GM12878 (cell line): ENCODE measurements at regions of chr7 and their contacts with region 1.

Region 1: DNA sequence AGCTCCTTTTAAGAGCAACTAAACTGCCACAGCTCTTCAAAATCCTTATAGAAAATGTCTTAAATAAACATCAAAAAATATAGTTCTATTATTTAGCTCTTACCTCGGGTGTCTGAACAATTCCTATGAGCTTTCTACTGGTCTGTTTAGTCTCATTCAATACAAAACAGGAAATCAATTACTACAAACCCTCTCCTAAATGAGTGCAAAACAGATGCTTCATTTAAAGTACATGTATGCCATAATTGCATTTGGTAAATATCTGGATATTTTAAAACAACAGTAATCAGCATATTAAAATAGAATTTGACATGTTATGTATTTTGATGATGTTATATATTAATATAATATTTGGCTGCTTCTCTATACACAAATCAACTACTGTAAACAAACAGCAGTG is 38.5 kb upstream of the MTPN start:
- DNase-seq: no peak
- ATAC-seq: no peak
- H3K4me3 ChIP-seq: no peak overlapping the region
- H3K27ac ChIP-seq: no peak overlapping the region
- H3K4me1 ChIP-seq: no peaks in the 10 kb centered on the region
- H3K27me3 ChIP-seq: no peaks in the 10 kb centered on the region
- CTCF ChIP-seq: no peak
- EP300 ChIP-seq: no peak
- POLR2A ChIP-seq: no peak
- RAD21 ChIP-seq: no peak

Region 2: GRCh38 chr7:135831455-135832195 is 184.0 kb before region 1 on chr7:
- CTCF ChIA-PET with region 1: no interaction called
- POLR2A ChIA-PET with region 1: no interaction called
- RAD21 ChIA-PET with region 1: no interaction called
- SMC1A ChIA-PET with region 1: no interaction called
- in situ Hi-C with region 1: no loop called
- intact Hi-C with region 1: no loop called
- DNase-seq: no peak
- ATAC-seq: no peak
- H3K4me3 ChIP-seq: no peak overlapping the region
- H3K27ac ChIP-seq: no peak overlapping the region
- H3K4me1 ChIP-seq: no peaks in the 10 kb centered on the region
- H3K27me3 ChIP-seq: no peaks in the 10 kb centered on the region; a peak in 1 of 4 replicates
- CTCF ChIP-seq: no peak
- EP300 ChIP-seq: no peak
- POLR2A ChIP-seq: no peak
- RAD21 ChIP-seq: no peak

Region 3: DNA sequence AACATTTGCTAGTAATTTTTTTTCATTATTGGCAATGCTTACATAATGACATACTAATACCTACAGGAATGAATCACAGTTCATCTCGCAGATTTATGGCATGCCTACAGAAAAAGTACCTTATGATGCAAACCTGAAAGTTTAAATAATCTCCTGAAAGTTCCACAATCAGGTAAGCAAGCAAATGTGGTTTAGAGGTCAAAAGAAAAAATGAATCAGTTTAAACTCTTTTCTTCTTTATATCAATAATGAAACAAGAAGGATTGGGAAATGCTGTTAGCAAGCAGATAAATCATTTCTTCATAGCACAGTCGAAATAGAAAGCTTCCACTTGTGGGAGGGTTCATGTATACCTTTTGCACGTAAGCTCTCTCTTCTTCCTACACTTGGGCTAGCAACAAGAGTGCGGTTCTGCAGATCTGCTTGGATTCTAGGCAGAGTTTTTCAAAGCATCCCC is 15.3 kb after region 1 on chr7:
- CTCF ChIA-PET with region 1: no interaction called
- POLR2A ChIA-PET with region 1: no interaction called
- RAD21 ChIA-PET with region 1: no interaction called
- SMC1A ChIA-PET with region 1: no interaction called
- in situ Hi-C with region 1: no loop called
- intact Hi-C with region 1: loop called (anchors 1 kb)
- DNase-seq: peak; percentile 37
- ATAC-seq: peak; percentile 91
- H3K4me3 ChIP-seq: no peak overlapping the region
- H3K27ac ChIP-seq: no peak overlapping the region
- H3K4me1 ChIP-seq: peaks cover 4% of the 10 kb centered on the region
- H3K27me3 ChIP-seq: no peaks in the 10 kb centered on the region
- CTCF ChIP-seq: no peak
- EP300 ChIP-seq: peak in 1 of 2 experiments; percentile 63; a peak in 1 of 4 replicates
- POLR2A ChIP-seq: no peak
- RAD21 ChIP-seq: no peak